ENCODE measurements at regions of chr17 and their contacts with region 1.

Region 1: GRCh38 chr17:39699818-39700147 is at the start of gene ERBB2:
- DNase-seq: peak; percentile 83
- H3K4me3 Mint-ChIP-seq: peak within 1 kb of the TSS; percentile 81
- H3K27ac Mint-ChIP-seq: peak within 1 kb of the TSS; percentile 56
- H3K4me1 Mint-ChIP-seq: peaks cover 20% of the 10 kb centered on the region
- H3K27me3 Mint-ChIP-seq: no peaks in the 10 kb centered on the region
- CTCF ChIP-seq: no peak
- total RNA-seq, gene ERBB2: 33.3 and 33.7 TPM in 2 replicates

Region 2: DNA sequence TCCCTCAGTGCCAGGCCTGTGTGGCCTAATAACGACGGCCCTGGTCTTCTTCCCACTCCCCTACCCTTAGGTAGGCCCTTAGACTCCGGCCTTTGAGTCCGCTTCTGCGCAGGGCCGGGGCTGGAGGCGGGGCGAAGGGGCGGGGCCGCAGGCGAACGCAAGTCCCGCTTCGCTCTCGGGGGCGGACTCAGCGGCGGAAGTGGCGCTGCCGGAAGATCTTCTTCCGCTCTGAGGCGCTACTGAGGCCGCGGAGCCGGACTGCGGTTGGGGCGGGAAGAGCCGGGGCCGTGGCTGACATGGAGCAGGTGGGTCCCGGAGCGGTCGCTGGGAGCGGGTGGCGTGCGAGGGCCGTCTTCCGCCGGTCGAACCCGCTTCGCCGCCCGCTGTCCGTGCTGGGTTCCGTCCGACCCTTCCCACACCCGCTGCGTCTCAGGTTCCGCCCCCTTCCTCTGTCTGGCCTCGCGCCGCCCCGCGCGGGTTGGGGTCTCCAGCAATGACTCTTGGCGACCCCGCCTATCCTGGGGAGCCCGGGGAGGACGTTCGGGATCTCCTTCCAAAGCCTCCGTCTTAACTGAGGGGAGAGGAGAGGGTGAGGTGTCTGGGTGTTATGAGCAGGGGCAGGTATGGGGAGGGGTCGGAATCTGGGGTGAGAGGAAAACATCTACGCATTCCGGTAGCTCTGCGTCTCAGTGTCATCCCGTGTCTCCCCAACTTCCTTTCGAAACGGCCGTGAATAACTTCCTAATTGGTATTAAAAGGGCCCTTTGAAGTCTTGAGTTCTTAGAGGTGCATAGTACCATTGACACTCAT is 62.7 kb before region 1 on chr17 and contains the start of gene STARD3:
- CTCF ChIA-PET with region 1: interaction called, 7 read pairs
- POLR2A ChIA-PET with region 1: interaction called, 16 read pairs
- intact Hi-C with region 1: no loop called
- DNase-seq: peak; percentile 82
- H3K4me3 Mint-ChIP-seq: peak within 1 kb of the TSS; percentile 93
- H3K27ac Mint-ChIP-seq: peak within 1 kb of the TSS; percentile 97
- H3K4me1 Mint-ChIP-seq: peaks cover 20% of the 10 kb centered on the region
- H3K27me3 Mint-ChIP-seq: peaks cover 3% of the 10 kb centered on the region
- CTCF ChIP-seq: peak; percentile 9
- total RNA-seq, gene STARD3: 30.1 and 31.1 TPM in 2 replicates

Region 3: DNA sequence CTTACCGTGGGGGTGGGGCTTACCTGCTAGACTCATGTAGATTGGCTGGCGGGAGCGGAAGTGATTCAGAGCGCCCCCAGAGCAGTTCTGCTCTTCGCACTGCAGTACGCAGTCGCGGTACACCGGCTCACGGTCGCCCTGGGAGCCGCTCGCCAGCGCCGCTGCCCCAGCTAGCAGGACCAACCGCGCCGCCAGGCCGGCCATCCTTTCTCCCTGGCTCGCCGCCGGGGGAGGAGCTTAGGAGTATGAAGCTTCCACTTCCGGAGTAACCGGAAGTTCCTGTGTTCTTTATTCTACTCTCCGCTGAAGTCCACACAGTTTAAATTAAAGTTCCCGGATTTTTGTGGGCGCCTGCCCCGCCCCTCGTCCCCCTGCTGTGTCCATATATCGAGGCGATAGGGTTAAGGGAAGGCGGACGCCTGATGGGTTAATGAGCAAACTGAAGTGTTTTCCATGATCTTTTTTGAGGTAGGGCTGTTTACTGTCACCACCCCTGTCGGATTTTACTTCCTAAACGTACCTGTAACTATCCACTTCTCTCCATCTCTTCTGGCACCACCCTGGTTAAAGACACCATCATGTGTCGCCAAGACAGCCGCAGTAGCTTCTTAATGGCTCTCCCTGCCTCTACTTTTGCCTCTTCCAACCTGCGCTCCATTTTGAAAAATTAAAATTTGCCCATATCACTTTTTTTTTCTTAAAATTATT is 11.8 kb before region 1 on chr17 and contains the start of gene PGAP3:
- CTCF ChIA-PET with region 1: interaction called, 3 read pairs
- POLR2A ChIA-PET with region 1: interaction called, 68 read pairs
- intact Hi-C with region 1: no loop called
- DNase-seq: peak; percentile 92
- H3K4me3 Mint-ChIP-seq: peak within 1 kb of the TSS; percentile 79
- H3K27ac Mint-ChIP-seq: peak within 1 kb of the TSS; percentile 95
- H3K4me1 Mint-ChIP-seq: peaks cover 14% of the 10 kb centered on the region
- H3K27me3 Mint-ChIP-seq: no peaks in the 10 kb centered on the region
- CTCF ChIP-seq: no peak
- total RNA-seq, gene PGAP3: 10.0 and 13.2 TPM in 2 replicates

Region 4: DNA sequence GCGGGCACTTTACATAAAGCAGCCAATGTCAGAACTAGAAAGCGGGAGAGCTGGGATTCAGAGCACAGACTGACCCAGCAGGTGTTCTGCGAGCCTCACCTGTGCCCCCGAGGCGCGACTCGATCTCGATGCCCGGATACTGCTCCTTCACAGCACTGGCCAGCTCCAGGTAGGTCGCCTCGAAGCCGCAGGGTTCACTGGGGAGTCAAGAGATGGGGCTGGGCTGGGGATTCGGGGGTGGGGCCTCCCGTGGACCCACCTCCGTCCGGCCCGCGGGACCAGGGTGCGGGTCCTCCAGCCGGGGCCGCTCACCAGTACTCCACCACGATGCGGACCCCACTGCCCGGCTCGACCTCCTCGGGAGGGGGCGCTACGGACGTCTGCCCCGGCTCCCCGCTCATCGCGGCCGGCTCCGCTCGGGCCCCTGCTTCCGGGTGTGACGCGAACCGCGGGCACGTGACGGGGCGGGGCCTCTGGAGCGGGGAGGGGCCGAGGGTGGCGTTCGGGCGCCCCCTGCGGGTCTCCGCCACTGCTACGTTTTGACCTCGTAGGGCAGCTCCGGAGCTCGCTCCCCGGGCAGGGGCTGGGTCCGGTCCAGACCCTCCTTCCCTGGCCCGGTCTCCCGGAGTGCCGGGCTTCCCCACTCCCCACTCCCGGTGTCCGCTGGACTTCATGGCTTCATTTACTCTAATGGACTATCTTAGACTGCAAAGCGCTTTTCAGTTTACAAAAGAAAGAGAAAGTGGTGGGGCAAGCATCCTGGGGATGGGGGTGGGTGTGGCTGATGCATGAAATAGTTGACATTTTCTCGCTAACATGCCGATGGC is 30.5 kb after region 1 on chr17 and contains the start of gene MIEN1:
- CTCF ChIA-PET with region 1: interaction called, 13 read pairs
- POLR2A ChIA-PET with region 1: interaction called, 36 read pairs
- intact Hi-C with region 1: no loop called
- DNase-seq: peak; percentile 82
- H3K4me3 Mint-ChIP-seq: peak within 1 kb of the TSS; percentile 78
- H3K27ac Mint-ChIP-seq: peak within 1 kb of the TSS; percentile 73
- H3K4me1 Mint-ChIP-seq: peaks cover 10% of the 10 kb centered on the region
- H3K27me3 Mint-ChIP-seq: no peaks in the 10 kb centered on the region
- CTCF ChIP-seq: peak; percentile 78
- total RNA-seq, gene MIEN1: 42.1 and 51.3 TPM in 2 replicates

Region 5: DNA sequence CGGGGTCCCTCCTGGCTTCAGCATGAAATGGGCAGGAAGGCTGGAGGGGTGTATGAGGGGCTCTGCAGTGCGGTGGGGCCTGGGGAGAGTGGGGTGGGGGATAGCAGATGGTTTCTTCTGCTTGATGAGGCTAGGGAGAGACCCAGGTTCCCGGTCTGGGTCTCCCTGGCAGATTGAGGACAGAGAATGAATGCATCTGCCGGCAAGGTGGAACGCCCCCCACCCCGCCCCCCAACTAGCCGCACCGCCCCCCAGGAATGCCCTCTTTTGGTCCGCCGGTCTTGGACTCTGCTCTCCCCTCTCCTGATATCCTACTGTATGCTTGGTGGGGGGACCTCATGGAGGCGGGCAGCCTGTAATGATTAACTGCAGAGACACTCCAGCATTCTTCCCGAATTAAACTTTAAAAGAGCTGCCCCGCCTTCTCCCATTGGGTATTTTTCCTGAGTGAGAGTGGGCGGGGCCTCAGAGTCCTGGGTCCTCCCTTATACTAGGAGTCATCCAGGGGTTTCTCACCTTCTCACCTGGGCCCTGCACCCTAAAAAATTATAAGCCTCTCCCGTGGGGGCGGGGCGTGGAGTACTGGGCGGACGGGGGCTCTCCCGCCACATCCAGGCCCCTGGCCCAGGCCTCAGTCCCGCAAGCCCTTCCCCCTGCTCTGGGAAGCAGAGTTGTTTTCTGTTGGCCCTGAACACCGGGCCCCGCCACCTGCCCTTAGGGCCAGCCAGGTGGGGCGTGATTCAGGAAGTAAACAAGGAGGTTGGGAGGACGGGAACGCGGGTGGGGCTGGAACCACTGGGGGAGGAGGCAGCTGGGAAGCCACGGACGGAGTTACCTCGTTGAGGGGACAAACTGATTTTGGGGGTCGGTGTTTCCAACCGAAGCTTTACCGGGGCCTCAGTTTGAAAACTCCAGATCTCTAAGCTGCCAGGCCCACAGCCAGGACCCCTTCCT is 39.4 kb after region 1 on chr17:
- CTCF ChIA-PET with region 1: no interaction called
- POLR2A ChIA-PET with region 1: interaction called, 35 read pairs
- intact Hi-C with region 1: no loop called
- DNase-seq: peak; percentile 90
- H3K4me3 Mint-ChIP-seq: peak overlapping the region; percentile 81
- H3K27ac Mint-ChIP-seq: peak overlapping the region; percentile 95
- H3K4me1 Mint-ChIP-seq: peaks cover 45% of the 10 kb centered on the region
- H3K27me3 Mint-ChIP-seq: peaks cover 11% of the 10 kb centered on the region
- CTCF ChIP-seq: no peak

Region 6: DNA sequence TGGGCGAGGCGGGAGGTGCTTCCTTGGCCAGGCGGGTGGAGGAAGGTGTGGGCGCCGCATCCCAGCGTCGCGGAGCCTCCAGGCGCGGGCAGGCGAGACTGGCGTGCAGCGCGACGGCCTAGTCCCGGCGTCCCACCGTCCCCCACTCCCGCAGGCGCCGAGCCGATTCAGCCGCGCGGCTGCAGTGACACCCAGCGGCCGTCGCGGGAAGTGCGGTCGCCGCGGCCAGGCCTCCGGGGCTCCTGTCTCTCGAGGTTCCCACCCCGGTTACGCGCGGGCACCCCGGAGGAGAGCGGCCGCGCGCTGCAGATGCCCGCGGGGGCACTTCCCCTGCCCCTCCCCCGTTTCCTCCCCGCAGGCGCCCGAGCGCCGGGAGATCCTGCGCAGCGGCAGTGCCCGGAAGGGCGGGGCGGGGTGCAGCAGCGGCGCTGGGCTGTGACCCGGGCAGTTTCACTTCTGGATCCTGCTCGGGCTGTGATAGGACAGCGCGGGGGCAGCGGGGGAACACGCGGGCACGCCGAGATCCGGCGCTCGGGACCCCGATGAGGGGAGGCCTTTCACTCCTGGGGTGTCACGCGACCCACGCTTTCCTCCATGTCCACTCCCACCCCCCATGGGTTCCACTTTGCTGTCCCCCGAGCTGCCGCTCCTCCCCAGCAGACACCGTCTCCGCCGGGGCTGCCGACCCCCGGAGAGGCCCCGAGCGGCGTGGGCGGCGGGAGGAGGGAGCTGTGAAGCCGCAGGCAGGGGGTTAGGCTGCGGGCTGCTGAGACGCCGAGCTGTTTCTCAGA is 54.6 kb after region 1 on chr17:
- CTCF ChIA-PET with region 1: interaction called, 6 read pairs
- POLR2A ChIA-PET with region 1: interaction called, 13 read pairs
- intact Hi-C with region 1: no loop called
- DNase-seq: peak; percentile 80
- H3K4me3 Mint-ChIP-seq: peak overlapping the region; percentile 70
- H3K27ac Mint-ChIP-seq: no peak overlapping the region
- H3K4me1 Mint-ChIP-seq: no peaks in the 10 kb centered on the region
- H3K27me3 Mint-ChIP-seq: peaks cover 45% of the 10 kb centered on the region
- CTCF ChIP-seq: peak; percentile 99

Region 7: DNA sequence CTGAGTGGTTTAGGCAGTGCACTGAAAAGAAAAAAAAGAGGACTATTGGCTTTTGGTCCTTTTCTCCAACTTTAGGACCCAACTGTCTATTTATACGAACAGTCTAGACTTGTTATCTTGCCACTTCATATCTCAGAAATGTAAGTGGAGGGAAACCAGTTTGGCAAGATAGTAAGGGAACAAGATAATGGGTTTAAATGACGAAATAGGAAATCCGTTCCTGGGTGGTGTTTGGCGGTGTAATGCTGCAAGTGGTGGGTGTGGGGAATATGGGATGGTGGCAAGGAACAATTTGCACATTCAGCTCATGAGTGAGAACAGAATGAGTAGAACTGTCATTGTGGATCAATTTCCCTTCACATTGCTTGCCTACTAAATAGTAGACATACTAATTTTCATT is 82.7 kb after region 1 on chr17:
- CTCF ChIA-PET with region 1: no interaction called
- POLR2A ChIA-PET with region 1: no interaction called
- intact Hi-C with region 1: no loop called
- DNase-seq: no peak
- H3K4me3 Mint-ChIP-seq: no peak overlapping the region
- H3K27ac Mint-ChIP-seq: no peak overlapping the region
- H3K4me1 Mint-ChIP-seq: no peaks in the 10 kb centered on the region
- H3K27me3 Mint-ChIP-seq: peaks cover 97% of the 10 kb centered on the region
- CTCF ChIP-seq: no peak

Region 8: DNA sequence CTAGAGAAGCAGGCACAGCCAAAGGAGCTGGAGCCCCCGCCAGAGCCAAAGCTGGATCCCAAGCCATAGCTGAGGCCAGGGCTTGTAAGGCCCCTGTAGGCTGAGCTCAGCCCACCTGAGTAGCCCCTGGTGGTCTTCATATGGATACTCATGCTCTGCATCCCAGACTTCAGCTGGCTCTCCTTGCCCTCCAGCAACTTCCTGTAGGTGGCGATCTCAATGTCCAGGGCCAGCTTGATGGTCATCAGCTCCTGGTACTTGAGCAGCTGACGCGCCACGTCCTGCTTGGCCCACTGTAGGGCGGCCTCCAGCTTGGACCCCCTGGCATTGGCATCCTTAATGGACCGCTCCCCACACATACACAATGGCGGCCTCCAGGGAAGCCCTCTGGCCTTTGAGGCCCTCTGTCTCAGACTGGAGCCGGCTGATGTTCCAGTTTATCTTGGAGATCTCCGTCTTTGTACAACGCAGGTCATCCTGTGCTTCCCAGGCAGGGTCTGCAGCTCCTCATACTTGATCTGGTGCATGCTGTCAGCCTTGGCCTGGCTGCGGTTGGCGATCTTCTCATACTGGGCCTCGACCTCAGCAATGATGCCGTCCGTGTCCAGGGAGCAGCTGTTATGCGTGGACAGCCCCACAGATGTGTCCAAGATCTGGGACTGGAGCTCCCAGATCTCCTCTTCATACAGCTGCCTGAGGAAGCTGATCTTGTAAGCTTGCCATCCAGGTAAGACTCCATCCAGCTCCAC is 135.4 kb after region 1 on chr17:
- CTCF ChIA-PET with region 1: no interaction called
- POLR2A ChIA-PET with region 1: no interaction called
- intact Hi-C with region 1: no loop called
- DNase-seq: no peak
- H3K4me3 Mint-ChIP-seq: no peak overlapping the region
- H3K27ac Mint-ChIP-seq: no peak overlapping the region
- H3K4me1 Mint-ChIP-seq: no peaks in the 10 kb centered on the region
- H3K27me3 Mint-ChIP-seq: peaks cover 88% of the 10 kb centered on the region
- CTCF ChIP-seq: no peak

Region 9: DNA sequence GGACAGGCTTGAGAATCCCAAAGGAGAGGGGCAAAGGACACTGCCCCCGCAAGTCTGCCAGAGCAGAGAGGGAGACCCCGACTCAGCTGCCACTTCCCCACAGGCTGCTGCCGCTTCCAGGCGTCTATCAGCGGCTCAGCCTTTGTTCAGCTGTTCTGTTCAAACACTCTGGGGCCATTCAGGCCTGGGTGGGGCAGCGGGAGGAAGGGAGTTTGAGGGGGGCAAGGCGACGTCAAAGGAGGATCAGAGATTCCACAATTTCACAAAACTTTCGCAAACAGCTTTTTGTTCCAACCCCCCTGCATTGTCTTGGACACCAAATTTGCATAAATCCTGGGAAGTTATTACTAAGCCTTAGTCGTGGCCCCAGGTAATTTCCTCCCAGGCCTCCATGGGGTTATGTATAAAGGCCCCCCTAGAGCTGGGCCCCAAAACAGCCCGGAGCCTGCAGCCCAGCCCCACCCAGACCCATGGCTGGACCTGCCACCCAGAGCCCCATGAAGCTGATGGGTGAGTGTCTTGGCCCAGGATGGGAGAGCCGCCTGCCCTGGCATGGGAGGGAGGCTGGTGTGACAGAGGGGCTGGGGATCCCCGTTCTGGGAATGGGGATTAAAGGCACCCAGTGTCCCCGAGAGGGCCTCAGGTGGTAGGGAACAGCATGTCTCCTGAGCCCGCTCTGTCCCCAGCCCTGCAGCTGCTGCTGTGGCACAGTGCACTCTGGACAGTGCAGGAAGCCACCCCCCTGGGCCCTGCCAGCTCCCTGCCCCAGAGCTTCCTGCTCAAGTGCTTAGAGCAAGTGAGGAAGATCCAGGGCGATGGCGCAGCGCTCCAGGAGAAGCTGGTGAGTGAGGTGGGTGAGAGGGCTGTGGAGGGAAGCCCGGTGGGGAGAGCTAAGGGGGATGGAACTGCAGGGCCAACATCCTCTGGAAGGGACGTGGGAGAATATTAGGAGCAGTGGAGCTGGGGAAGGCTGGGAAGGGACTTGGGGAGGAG is 315.5 kb after region 1 on chr17 and contains the start of gene CSF3:
- CTCF ChIA-PET with region 1: no interaction called
- POLR2A ChIA-PET with region 1: no interaction called
- intact Hi-C with region 1: no loop called
- DNase-seq: peak; percentile 92
- H3K4me3 Mint-ChIP-seq: peak within 1 kb of the TSS; percentile 65
- H3K27ac Mint-ChIP-seq: peak within 1 kb of the TSS; percentile 39
- H3K4me1 Mint-ChIP-seq: peaks cover 35% of the 10 kb centered on the region
- H3K27me3 Mint-ChIP-seq: no peaks in the 10 kb centered on the region
- CTCF ChIP-seq: no peak
- total RNA-seq, gene CSF3: 9.6 and 17.1 TPM in 2 replicates